Gastrocnemius medialis (tissue), 4 donors: ENCODE measurements at regions of chr1 and their contacts with region 1.

Region 1: GRCh38 chr1:159197561-159198557 is 6.8 kb upstream of the ACKR1 start:
- DNase-seq: peak; percentile 24 to 55
- ATAC-seq: peak; percentile 78 to 81
- H3K4me3 ChIP-seq: no peak overlapping the region
- H3K27ac ChIP-seq: no peak overlapping the region
- H3K4me1 ChIP-seq: no peaks in the 10 kb centered on the region
- H3K27me3 ChIP-seq: no peaks in the 10 kb centered on the region
- CTCF ChIP-seq: peak; percentile 67 to 79 (median 74)
- POLR2A ChIP-seq: no peak

Region 2: GRCh38 chr1:159098596-159098995 is 99.3 kb before region 1 on chr1:
- in situ Hi-C with region 1: no loop called
- intact Hi-C with region 1: no loop called
- DNase-seq: no peak
- ATAC-seq: no peak
- H3K4me3 ChIP-seq: no peak overlapping the region
- H3K27ac ChIP-seq: no peak overlapping the region
- H3K4me1 ChIP-seq: no peaks in the 10 kb centered on the region
- H3K27me3 ChIP-seq: no peaks in the 10 kb centered on the region
- CTCF ChIP-seq: no peak
- POLR2A ChIP-seq: no peak

Region 3: GRCh38 chr1:159113596-159114433 is 84.0 kb before region 1 on chr1:
- in situ Hi-C with region 1: no loop called
- intact Hi-C with region 1: no loop called
- DNase-seq: no peak
- ATAC-seq: no peak
- H3K4me3 ChIP-seq: no peak overlapping the region
- H3K27ac ChIP-seq: no peak overlapping the region
- H3K4me1 ChIP-seq: no peaks in the 10 kb centered on the region
- H3K27me3 ChIP-seq: no peaks in the 10 kb centered on the region
- CTCF ChIP-seq: no peak
- POLR2A ChIP-seq: no peak

Region 4: GRCh38 chr1:159161001-159161718 is 36.7 kb before region 1 on chr1:
- in situ Hi-C with region 1: loop called in 1 of 4 experiments (anchors 5 kb)
- intact Hi-C with region 1: loop called (anchors 1 kb)
- DNase-seq: peak; percentile 66 to 82
- ATAC-seq: peak; percentile 98 to 100
- H3K4me3 ChIP-seq: no peak overlapping the region
- H3K27ac ChIP-seq: peak overlapping the region; percentile 71 to 86 (median 78)
- H3K4me1 ChIP-seq: peaks cover 5 to 7% of the 10 kb centered on the region in 2 donors
- H3K27me3 ChIP-seq: peaks cover 0 to 1% (median 0%) of the 10 kb centered on the region in 3 donors
- CTCF ChIP-seq: peak; percentile 81 to 99 (median 88)
- POLR2A ChIP-seq: no peak

Region 5: DNA sequence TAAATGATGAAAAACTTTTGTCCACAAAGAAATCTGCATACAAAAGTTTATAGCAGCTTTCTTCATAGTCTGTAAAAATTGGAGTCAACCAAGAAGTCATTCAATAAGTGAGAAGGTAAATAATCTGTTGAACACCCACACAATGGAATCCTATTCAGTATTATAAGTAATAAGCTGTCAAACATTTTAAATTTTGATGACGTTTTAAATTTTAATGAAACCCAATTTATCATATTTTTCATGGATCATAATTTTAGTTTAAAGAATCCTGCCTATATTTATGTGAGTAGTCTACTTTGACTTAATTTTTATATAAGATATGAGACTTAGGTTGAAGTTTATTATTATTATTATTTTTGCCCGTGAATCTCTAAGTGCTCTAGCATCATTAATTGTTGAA is 261.7 kb after region 1 on chr1:
- in situ Hi-C with region 1: no loop called
- intact Hi-C with region 1: no loop called
- DNase-seq: no peak
- ATAC-seq: no peak
- H3K4me3 ChIP-seq: no peak overlapping the region
- H3K27ac ChIP-seq: no peak overlapping the region
- H3K4me1 ChIP-seq: no peaks in the 10 kb centered on the region
- H3K27me3 ChIP-seq: no peaks in the 10 kb centered on the region
- CTCF ChIP-seq: no peak
- POLR2A ChIP-seq: no peak